Endothelial cell of umbilical vein (primary cell): ENCODE measurements at regions of chr21 and their contacts with region 1.

Region 1: DNA sequence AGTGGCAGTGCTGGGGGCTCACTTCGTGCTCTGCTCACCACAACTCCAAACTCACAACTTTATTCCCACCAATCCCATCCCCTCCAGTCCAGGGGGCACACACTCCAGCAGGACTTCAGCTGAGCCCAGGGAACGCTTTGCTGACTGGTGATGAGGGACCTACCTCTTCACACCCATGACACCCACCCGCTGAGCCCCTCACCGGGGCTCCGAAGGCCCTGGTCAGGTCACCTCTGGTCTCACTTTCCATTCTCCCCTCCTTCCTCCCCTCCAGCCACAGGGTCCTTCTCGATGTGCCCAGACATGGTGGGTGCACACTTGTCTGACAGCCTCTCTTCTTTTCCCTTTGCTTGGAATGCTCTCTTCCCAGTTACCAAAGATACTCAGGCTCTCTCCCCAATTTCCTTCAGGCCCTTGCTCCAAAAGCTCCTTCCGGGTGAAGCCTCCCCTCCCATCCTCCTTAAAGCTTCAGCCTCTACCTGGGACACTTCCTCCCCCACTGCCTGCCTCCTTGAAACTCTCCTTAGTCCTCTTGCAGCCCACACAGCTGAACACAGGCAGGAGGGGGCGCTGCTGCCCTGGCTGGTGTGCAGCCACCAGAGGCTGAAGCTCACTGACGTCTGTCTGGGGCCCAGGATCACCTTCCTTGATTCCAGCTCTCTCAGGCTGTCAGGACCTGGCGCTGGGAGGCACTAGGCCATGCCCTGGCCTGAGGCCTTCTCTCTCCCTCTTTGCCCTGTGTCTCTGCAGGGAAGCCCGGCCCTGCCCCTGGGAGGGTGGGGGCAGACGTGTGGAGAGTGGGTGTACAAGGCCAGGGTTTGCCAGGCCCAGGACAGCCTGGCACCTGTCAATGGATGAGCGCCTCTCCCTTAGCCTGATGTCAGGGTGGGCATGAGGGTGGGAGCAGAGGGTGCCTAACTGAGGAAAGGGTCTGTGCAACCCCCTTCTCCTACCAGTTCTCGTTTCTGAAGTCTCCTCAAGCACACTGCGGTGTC is 1.6 kb downstream of the KCNE1 start:
- DNase-seq: peak; percentile 78
- H3K4me3 ChIP-seq: no peak overlapping the region
- H3K27ac ChIP-seq: no peak overlapping the region
- H3K4me1 ChIP-seq: no peaks in the 10 kb centered on the region
- H3K27me3 ChIP-seq: no peaks in the 10 kb centered on the region
- CTCF ChIP-seq: peak; percentile 69 to 94
- POLR2A ChIP-seq: no peak

Region 2: DNA sequence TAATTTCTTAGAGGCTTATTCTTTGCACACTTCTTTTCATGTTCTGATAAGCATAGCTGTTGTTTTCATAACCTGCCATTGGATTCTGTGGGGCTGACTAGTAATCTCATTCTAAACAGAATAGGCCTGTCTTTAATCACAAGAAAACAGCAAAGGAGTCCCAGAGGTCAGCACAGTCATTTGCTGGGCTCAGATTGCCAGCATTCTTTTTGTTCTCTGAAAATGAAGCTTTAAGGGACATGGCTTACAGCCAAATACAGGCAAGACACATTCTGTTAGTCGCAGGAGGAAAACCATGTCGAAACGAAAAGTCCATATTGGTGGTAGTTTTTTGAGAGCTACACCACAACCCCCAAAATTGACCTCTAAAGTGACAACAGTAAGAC is 362.0 kb before region 1 on chr21:
- CTCF ChIA-PET with region 1: no interaction called
- POLR2A ChIA-PET with region 1: no interaction called
- dilution Hi-C with region 1: no loop called
- intact Hi-C with region 1: no loop called
- DNase-seq: peak; percentile 65
- H3K4me3 ChIP-seq: no peak overlapping the region
- H3K27ac ChIP-seq: no peak overlapping the region
- H3K4me1 ChIP-seq: peaks cover 2% of the 10 kb centered on the region
- H3K27me3 ChIP-seq: no peaks in the 10 kb centered on the region
- CTCF ChIP-seq: no peak
- POLR2A ChIP-seq: no peak

Region 3: DNA sequence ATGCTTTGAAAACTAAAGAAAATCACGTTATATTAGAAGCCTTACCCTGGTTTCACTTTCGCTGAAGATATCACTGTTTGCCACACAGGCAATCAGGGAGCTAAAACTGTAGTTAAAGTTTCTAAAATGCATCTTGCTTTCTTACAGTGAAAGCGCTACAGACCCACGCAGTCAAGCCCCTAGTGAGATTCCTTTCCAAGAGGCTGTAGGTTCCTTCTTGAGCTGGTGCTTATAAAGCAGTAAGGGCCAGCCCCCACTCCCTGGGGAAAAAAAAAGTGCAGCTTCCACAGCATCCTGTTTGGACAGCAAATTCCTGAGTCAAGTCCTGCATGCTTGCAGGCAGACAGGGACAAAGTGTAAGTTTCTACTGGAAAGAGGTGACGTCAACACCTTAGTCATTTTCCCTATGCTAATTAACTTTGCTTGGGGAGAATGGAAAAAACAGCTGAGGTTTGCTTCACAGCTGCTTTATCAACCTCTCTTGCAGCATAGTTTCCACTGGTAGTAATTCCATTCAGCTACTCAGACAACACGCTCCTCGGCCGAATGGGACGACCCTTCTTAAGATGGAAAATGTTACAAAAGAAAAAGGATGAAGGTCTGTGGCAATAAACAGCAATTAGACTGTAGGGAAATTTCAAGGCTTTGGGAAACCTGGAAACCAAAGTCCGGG is 16.3 kb after region 1 on chr21:
- CTCF ChIA-PET with region 1: interaction called, 58 read pairs
- POLR2A ChIA-PET with region 1: interaction called, 5 read pairs
- dilution Hi-C with region 1: no loop called
- intact Hi-C with region 1: loop called (anchors 1 kb)
- DNase-seq: peak; percentile 99
- H3K4me3 ChIP-seq: peak overlapping the region; percentile 41 to 93 (median 76)
- H3K27ac ChIP-seq: peak overlapping the region; percentile 98
- H3K4me1 ChIP-seq: peaks cover 23% of the 10 kb centered on the region
- H3K27me3 ChIP-seq: no peaks in the 10 kb centered on the region
- CTCF ChIP-seq: no peak
- POLR2A ChIP-seq: peak; percentile 97

Region 4: DNA sequence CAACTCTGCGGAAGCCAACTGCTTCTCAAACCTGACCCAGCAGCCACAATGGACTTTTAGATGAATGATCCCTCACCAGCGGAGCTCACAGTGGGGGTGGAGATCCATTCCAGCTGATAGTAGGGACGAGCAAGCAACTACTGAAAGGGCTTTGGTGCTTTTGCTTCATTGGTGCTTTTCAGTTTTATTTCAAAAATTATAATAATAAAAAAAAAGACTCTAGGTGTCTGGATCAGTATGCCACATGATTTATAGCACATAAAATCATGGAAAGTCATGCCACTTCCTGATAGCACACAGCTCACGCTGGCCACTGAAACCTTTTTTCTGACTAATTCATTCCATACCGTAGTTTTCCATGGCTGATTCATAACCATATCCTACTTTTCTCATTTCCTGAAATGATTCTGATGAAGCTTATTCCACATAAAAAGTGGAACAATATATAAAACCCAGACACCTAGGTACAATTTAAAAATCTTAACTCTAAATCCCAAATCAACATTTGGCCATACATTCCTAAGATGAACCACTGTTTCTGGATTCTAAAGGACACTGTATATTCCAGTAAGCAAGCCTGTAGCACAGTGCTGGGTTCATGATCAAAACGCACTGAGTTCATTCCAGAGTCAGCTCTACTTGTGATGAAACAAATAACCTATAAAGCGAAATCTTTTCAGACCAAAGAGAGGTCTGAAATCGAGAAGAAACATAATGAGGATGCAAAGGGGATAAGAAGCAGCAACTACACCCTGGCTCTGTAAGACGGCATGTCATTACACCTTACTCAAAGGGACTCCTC is 42.9 kb after region 1 on chr21:
- CTCF ChIA-PET with region 1: interaction called, 21 read pairs
- POLR2A ChIA-PET with region 1: no interaction called
- dilution Hi-C with region 1: no loop called
- intact Hi-C with region 1: no loop called
- DNase-seq: peak; percentile 96
- H3K4me3 ChIP-seq: peak overlapping the region in 1 of 3 experiments; percentile 9
- H3K27ac ChIP-seq: peak overlapping the region; percentile 81
- H3K4me1 ChIP-seq: peaks cover 21% of the 10 kb centered on the region
- H3K27me3 ChIP-seq: no peaks in the 10 kb centered on the region
- CTCF ChIP-seq: no peak
- POLR2A ChIP-seq: no peak

Region 5: GRCh38 chr21:34582506-34583150 is 72.2 kb after region 1 on chr21:
- CTCF ChIA-PET with region 1: interaction called, 216 read pairs
- POLR2A ChIA-PET with region 1: no interaction called
- dilution Hi-C with region 1: no loop called
- intact Hi-C with region 1: loop called (anchors 1 kb)
- DNase-seq: peak; percentile 49
- H3K4me3 ChIP-seq: no peak overlapping the region
- H3K27ac ChIP-seq: no peak overlapping the region
- H3K4me1 ChIP-seq: no peaks in the 10 kb centered on the region
- H3K27me3 ChIP-seq: no peaks in the 10 kb centered on the region
- CTCF ChIP-seq: peak; percentile 30 to 56
- POLR2A ChIP-seq: no peak

Region 6: GRCh38 chr21:34630536-34631143 is 120.2 kb after region 1 on chr21:
- CTCF ChIA-PET with region 1: interaction called, 63 read pairs
- POLR2A ChIA-PET with region 1: no interaction called
- dilution Hi-C with region 1: no loop called
- intact Hi-C with region 1: loop called (anchors 1 kb)
- DNase-seq: peak; percentile 62
- H3K4me3 ChIP-seq: no peak overlapping the region
- H3K27ac ChIP-seq: no peak overlapping the region
- H3K4me1 ChIP-seq: no peaks in the 10 kb centered on the region
- H3K27me3 ChIP-seq: peaks cover 5 to 14% of the 10 kb centered on the region in 2 experiments
- CTCF ChIP-seq: peak; percentile 54 to 68
- POLR2A ChIP-seq: no peak